Activated CD4-positive, alpha-beta T cell treated with anti-CD3 and anti-CD28 coated beads for 36 hours (primary cell): ENCODE measurements at regions of chr9 and their contacts with region 1.

Region 1: DNA sequence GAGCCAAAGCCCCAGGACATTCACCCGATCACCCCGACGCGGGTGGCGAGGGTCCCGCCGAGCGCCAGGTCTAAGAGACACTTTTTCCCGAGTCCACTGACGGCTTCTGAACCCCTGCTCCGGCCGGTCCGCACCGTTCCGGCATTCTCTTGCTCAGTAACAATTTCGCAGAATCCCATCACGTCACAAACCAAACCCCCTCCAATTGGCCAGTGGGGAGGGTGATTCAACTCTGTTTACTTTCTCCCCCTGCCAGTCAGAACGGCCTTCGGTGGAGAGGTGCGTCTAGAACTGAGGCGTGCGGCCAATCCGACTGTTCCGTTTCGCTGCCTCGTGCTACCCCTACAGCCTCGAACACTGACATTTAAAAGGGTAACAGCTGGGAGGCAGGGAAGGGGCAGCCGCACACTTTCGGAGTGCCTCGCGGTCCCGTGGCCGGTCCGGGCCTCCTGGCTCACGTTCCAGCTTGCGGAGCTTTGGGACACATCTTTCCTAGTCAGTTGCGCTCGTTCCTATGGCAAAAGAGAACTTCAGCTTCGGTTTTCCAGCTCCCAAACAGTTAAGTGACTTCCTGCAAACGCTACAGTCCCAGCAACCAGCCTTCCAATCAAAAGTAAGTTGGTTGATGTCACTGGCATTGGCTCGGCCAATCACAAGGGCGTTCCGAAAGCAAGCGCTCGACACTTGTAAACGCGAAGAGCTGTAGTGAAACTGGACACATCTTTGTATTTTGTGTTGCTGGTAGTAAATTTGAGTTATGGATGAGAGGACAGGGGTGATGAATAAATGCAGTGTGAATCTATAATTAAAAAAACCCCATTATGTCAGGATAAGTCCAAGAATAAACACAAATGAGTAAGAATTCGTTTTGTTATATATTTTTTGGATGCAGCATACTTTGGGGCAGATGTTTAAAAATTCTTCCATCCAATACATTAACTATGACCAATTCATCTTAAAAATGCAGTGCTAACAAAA is at the start of gene KLF9:
- DNase-seq: peak; percentile 95
- ATAC-seq: peak; percentile 76
- H3K4me3 Mint-ChIP-seq: peak within 1 kb of the TSS; percentile 99
- H3K27ac Mint-ChIP-seq: peak within 1 kb of the TSS; percentile 100
- H3K4me1 Mint-ChIP-seq: peaks cover 38% of the 10 kb centered on the region
- H3K27me3 Mint-ChIP-seq: no peaks in the 10 kb centered on the region
- total RNA-seq, gene KLF9: 20.2 to 22.3 TPM

Region 2: GRCh38 chr9:69174616-69175463 is 1239.2 kb before region 1 on chr9:
- CTCF ChIA-PET with region 1: no interaction called
- POLR2A ChIA-PET with region 1: no interaction called
- intact Hi-C with region 1: loop called in 1 of 2 experiments (anchors 5 kb)
- DNase-seq: peak; percentile 79
- ATAC-seq: peak; percentile 81
- H3K4me3 Mint-ChIP-seq: peak overlapping the region; percentile 74
- H3K27ac Mint-ChIP-seq: peak overlapping the region; percentile 83
- H3K4me1 Mint-ChIP-seq: peaks cover 48% of the 10 kb centered on the region
- H3K27me3 Mint-ChIP-seq: peaks cover 36% of the 10 kb centered on the region

Region 3: GRCh38 chr9:70147614-70148013 is 266.5 kb before region 1 on chr9:
- CTCF ChIA-PET with region 1: no interaction called
- POLR2A ChIA-PET with region 1: no interaction called
- intact Hi-C with region 1: no loop called
- DNase-seq: no peak
- ATAC-seq: no peak
- H3K4me3 Mint-ChIP-seq: no peak overlapping the region
- H3K27ac Mint-ChIP-seq: no peak overlapping the region
- H3K4me1 Mint-ChIP-seq: no peaks in the 10 kb centered on the region
- H3K27me3 Mint-ChIP-seq: peaks cover 6% of the 10 kb centered on the region

Region 4: DNA sequence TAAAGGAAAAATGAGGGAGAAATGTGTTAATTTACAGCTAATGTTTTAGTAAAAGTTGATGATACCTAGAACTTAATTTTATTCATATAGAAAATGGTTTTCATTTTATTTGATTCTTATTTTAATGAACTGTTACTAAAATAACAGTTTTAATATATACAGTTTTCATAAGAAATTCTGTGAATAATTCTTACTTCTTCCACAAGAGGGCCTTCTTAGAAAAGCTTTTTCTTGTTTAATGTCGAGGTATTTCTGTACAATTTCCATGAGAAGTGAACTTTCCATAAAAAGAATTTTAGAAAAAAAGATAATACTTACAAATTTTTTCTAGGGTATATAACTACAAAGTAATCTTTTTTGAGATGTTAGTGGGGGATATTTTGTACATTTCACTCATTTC is 73.5 kb before region 1 on chr9:
- CTCF ChIA-PET with region 1: interaction called, 6 read pairs
- POLR2A ChIA-PET with region 1: interaction called, 3 read pairs
- intact Hi-C with region 1: loop called in 1 of 2 experiments (anchors 2 kb)
- DNase-seq: no peak
- ATAC-seq: no peak
- H3K4me3 Mint-ChIP-seq: no peak overlapping the region
- H3K27ac Mint-ChIP-seq: no peak overlapping the region
- H3K4me1 Mint-ChIP-seq: no peaks in the 10 kb centered on the region
- H3K27me3 Mint-ChIP-seq: no peaks in the 10 kb centered on the region

Region 5: GRCh38 chr9:70563431-70564204 is 149.5 kb after region 1 on chr9:
- CTCF ChIA-PET with region 1: interaction called, 7 read pairs
- POLR2A ChIA-PET with region 1: interaction called, 6 read pairs
- intact Hi-C with region 1: loop called (anchors 1 to 2 kb)
- DNase-seq: peak; percentile 72
- ATAC-seq: peak; percentile 93
- H3K4me3 Mint-ChIP-seq: peak overlapping the region; percentile 40
- H3K27ac Mint-ChIP-seq: peak overlapping the region; percentile 95
- H3K4me1 Mint-ChIP-seq: peaks cover 45% of the 10 kb centered on the region
- H3K27me3 Mint-ChIP-seq: no peaks in the 10 kb centered on the region

Region 6: DNA sequence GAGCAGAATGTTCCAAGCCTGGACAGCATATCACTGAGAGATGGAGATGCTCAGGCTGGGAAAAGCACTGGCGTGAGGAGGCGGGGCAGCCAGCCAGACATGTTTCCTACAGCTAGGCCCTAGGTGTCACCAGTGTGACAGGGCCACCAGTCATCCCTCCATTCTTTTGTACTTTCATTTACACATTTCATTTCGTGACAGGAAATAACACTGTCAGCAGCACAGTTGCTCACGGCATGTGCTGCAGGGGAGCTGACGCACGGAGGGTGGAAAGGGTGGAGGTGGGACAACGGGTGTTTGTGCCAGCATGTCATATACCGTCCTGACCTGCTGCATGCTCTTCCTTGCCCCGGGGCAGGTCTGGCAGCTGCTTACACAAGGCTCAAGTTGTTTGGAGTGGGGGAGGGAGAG is 1369.0 kb after region 1 on chr9:
- CTCF ChIA-PET with region 1: no interaction called
- POLR2A ChIA-PET with region 1: no interaction called
- intact Hi-C with region 1: loop called (anchors 5 to 10 kb)
- DNase-seq: peak; percentile 93
- ATAC-seq: peak; percentile 97
- H3K4me3 Mint-ChIP-seq: peak overlapping the region; percentile 68
- H3K27ac Mint-ChIP-seq: peak overlapping the region; percentile 98
- H3K4me1 Mint-ChIP-seq: peaks cover 48% of the 10 kb centered on the region
- H3K27me3 Mint-ChIP-seq: no peaks in the 10 kb centered on the region